Transverse colon (tissue), 4 donors: ENCODE measurements at regions of chrX and their contacts with region 1.

Region 1: GRCh38 chrX:69222103-69223090 is 57.1 kb upstream of the PJA1 start:
- DNase-seq: peak; percentile 65
- H3K4me3 ChIP-seq: no peak overlapping the region
- H3K27ac ChIP-seq: no peak overlapping the region
- H3K4me1 ChIP-seq: no peaks in the 10 kb centered on the region
- H3K27me3 ChIP-seq: no peaks in the 10 kb centered on the region
- CTCF ChIP-seq: peak; percentile 64 to 72 (median 67)
- EP300 ChIP-seq: no peak
- POLR2A ChIP-seq: no peak

Region 2: GRCh38 chrX:68634654-68635232 is 587.7 kb before region 1 on chrX:
- in situ Hi-C with region 1: no loop called
- intact Hi-C with region 1: no loop called
- DNase-seq: no peak
- H3K4me3 ChIP-seq: no peak overlapping the region
- H3K27ac ChIP-seq: no peak overlapping the region
- H3K4me1 ChIP-seq: no peaks in the 10 kb centered on the region
- H3K27me3 ChIP-seq: no peaks in the 10 kb centered on the region
- CTCF ChIP-seq: no peak
- EP300 ChIP-seq: no peak
- POLR2A ChIP-seq: no peak

Region 3: GRCh38 chrX:69093960-69094871 is 128.2 kb before region 1 on chrX:
- in situ Hi-C with region 1: loop called in 1 of 4 experiments (anchors 25 kb)
- intact Hi-C with region 1: no loop called
- DNase-seq: peak; percentile 24
- H3K4me3 ChIP-seq: no peak overlapping the region
- H3K27ac ChIP-seq: no peak overlapping the region
- H3K4me1 ChIP-seq: no peaks in the 10 kb centered on the region
- H3K27me3 ChIP-seq: no peaks in the 10 kb centered on the region
- CTCF ChIP-seq: peak in 3 of 5 experiments; percentile 44 to 50 (median 47)
- EP300 ChIP-seq: no peak
- POLR2A ChIP-seq: no peak